Dendritic cell treated with granulocyte-macrophage colony-stimulating factor and Interleukin-4, amounts not matched to agents 40 ng/mL and 50 ng/mL, for 4 days (primary cell): ENCODE measurements at regions of chr10 and their contacts with region 1.

Region 1: DNA sequence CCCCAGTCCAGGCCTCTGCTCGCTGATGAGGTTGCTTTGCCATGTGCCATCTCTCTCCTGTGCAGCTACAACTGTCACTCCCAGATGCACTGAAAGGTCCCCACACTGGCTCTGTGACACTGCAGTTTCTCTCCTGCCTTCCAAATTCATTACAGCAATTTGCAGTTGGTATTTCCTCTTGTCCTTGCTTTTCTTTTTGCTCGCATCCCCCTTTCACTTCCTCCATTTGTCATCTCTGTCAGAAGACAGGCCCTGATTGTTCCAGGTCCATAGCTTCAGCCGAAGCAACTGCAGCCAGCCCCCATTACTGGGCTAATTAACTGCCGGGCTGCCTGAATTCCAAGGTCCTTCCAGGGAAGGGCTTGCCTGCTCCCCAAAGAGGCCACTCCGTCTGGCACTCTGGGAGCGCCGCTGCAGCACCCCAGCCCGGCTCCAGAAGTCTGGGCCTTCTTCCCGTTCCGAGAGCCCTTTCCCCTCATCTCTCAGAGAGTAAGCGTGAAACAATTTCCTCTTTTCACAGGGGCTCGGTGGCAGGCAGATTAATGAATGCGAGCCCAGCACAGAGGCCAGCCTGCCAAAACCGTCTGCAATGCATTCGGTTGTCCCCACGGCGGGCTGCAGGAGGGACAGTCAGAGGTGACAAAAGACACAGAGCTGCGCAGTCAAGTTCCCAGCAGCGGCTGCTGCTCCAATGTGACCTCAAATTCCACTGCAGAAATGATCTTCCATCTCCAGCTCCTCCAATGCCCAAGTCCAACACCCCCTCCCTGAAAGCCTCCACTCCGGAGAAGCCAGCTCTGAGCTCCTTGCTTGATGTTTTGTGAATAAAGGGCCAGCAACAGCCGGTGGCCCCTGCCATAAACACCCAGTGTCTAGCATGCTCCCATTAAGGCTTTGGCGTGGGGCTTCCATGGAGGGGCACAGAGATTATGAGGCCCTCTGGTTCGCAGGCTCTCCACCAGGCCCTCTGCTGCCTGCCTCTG is 279.4 kb upstream of the HABP2 start:
- H3K4me3 Mint-ChIP-seq: peak overlapping the region; percentile 54
- H3K27ac Mint-ChIP-seq: peak overlapping the region; percentile 75
- H3K4me1 Mint-ChIP-seq: peaks cover 44% of the 10 kb centered on the region
- H3K27me3 Mint-ChIP-seq: peaks cover 45% of the 10 kb centered on the region

Region 2: DNA sequence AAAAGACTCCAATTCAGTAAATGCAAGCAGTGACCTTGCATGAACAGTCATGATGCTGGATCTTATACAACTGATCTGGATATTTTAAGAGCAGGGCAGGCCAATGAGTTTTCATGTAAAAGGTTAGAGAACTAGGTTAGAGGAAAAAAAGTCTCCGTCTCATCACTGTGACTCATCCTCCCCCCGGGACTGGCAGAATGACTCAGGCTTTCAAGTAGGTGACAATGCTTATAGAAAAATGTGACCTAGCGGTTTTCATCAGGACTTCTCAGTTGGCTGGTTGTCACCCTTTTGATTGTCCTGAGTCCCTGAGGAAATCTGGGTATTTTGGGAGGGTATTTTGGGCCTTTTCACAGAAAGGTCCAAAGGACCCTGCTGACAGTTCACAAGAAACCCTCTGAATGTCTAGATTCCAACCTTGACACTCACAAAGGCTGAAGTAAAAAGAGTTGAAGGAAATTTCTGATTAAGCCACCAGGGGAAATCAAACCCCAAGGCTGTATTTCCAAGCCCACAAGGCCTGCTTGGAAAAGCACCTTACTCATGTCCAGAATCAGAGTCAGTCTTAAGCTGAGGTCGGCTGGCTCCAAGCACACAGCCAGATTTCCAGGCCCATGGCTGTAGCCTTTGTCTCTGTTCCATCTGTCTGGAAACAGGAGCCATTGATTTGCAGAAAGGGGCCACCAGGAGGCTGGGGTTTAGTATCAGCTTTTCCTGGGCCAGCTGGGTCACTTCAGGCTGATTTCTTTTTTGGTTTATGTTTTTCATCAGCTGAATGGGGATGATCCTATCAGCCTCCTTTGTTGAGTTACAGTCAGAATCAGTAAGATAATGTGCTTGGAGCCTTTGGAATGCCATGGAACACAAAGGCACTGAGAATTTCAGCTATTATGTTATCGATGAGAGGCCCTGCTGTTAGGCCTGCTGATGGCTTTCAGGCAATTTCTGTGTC is 53.0 kb after region 1 on chr10:
- intact Hi-C with region 1: loop called (anchors 10 kb)
- H3K4me3 Mint-ChIP-seq: no peak overlapping the region
- H3K27ac Mint-ChIP-seq: no peak overlapping the region
- H3K4me1 Mint-ChIP-seq: peaks cover 53% of the 10 kb centered on the region
- H3K27me3 Mint-ChIP-seq: peaks cover 67% of the 10 kb centered on the region

Region 3: DNA sequence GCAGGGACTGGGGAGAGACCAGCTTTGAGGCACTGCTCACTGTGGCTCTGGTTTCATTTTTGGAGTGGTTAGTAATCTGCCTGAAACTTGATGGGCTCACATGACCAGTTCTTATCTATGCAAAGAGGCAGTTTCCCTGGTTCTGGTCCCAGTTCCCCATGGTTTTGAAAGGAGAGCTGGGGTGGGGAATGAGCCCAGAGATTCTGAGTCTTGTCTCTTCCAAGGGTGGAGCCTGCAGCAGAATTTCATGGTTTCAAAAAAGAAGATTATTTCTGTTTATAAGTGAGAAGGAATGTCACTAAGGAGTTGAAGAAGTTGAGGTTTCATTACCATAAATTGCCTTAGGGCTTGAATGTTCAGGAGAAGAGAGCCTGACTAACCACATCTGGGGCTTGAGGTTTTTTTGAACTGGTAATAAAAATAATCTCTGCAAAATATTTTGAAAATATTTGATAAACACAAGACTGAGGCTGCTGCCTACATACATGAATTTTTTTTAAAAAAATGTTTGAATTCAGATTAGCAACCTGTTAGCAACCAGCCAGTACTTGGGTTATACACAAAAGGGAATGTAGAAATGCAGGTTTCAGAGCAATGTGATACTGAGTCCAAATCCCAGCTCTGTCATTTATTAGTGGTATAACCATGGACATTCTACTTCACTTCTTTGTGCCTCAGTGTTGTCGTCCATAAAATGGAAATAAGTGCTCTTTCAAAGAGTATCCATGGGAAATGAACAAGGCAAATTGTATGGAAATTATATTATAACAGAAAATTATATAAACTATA is 89.4 kb after region 1 on chr10:
- intact Hi-C with region 1: loop called (anchors 10 kb)
- H3K4me3 Mint-ChIP-seq: no peak overlapping the region
- H3K27ac Mint-ChIP-seq: no peak overlapping the region
- H3K4me1 Mint-ChIP-seq: peaks cover 8% of the 10 kb centered on the region
- H3K27me3 Mint-ChIP-seq: peaks cover 34% of the 10 kb centered on the region